ENCODE measurements at regions of chr10 and their contacts with region 1.

Region 1: GRCh38 chr10:14528450-14528849 is 197.7 kb upstream of the FRMD4A start:
- DNase-seq: no peak
- H3K4me3 Mint-ChIP-seq: peak overlapping the region; percentile 62
- H3K27ac Mint-ChIP-seq: peak overlapping the region; percentile 82
- H3K4me1 Mint-ChIP-seq: peaks cover 92% of the 10 kb centered on the region
- H3K27me3 Mint-ChIP-seq: no peaks in the 10 kb centered on the region

Region 2: DNA sequence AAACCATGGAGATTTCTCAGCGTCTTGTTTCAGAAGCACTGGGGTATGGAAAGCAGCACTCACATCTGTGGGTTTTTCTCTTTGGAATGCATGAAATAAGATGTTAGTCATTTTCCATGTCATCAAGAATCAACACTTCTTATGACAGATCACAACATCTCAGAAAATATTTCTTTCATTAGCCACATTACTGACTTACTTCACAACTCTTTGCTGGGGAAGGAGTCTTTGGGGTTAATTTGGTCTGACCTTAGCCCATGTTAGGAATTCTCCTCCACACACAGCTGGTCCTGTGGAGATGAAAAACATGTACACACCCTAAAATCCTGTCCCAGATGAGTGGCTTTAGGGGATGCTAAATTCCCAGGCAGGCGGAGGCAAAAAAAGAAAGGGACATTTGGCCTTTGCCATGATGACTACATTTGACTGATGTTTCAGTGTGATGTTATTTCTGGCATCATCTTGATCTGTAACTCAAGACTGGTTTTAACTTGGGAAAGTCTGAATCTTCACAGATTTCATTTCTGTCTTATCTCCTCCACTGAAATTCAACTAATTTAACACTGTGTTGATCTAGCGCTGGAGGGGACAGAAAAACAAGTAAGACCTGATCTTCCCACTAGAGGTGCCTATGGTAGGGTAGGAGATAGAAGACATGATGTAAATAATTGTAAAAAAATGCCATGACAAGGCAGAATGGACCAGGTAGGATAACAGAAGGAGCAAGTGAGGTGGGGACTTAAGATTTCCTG is 578.4 kb before region 1 on chr10:
- intact Hi-C with region 1: no loop called
- DNase-seq: no peak
- H3K4me3 Mint-ChIP-seq: no peak overlapping the region
- H3K27ac Mint-ChIP-seq: no peak overlapping the region
- H3K4me1 Mint-ChIP-seq: no peaks in the 10 kb centered on the region
- H3K27me3 Mint-ChIP-seq: peaks cover 2% of the 10 kb centered on the region

Region 3: GRCh38 chr10:14507176-14507575 is 21.3 kb before region 1 on chr10:
- intact Hi-C with region 1: loop called (anchors 2 kb)
- DNase-seq: peak; percentile 37
- H3K4me3 Mint-ChIP-seq: no peak overlapping the region
- H3K27ac Mint-ChIP-seq: peak overlapping the region; percentile 70
- H3K4me1 Mint-ChIP-seq: peaks cover 35% of the 10 kb centered on the region
- H3K27me3 Mint-ChIP-seq: no peaks in the 10 kb centered on the region

Region 4: GRCh38 chr10:14553448-14553847 is 25.0 kb after region 1 on chr10:
- intact Hi-C with region 1: loop called (anchors 2 kb)
- DNase-seq: no peak
- H3K4me3 Mint-ChIP-seq: peak overlapping the region; percentile 11
- H3K27ac Mint-ChIP-seq: peak overlapping the region; percentile 78
- H3K4me1 Mint-ChIP-seq: peaks cover 84% of the 10 kb centered on the region
- H3K27me3 Mint-ChIP-seq: peaks cover 1% of the 10 kb centered on the region

Region 5: DNA sequence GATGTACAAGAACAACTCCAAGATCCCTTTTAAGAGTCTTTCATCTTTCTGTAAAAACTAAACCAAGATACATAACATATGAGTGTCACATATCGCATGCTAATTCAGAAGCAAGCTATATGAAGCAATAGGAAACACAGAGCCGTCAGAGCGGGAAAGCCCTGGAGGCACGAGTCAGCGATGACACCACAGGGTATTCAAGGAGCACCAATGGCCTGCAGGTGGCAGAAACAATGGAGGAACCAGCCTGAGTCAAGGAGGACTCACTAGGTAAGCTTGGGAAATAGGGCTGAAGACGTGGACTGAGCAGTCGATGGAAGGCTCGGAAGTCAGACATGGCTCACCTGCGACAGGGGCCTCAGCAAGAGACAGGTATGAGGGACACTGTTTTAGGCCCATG is 31.8 kb after region 1 on chr10:
- intact Hi-C with region 1: loop called (anchors 5 kb)
- DNase-seq: peak; percentile 59
- H3K4me3 Mint-ChIP-seq: peak overlapping the region; percentile 41
- H3K27ac Mint-ChIP-seq: peak overlapping the region; percentile 95
- H3K4me1 Mint-ChIP-seq: peaks cover 97% of the 10 kb centered on the region
- H3K27me3 Mint-ChIP-seq: no peaks in the 10 kb centered on the region

Region 6: GRCh38 chr10:14635043-14635710 is 106.7 kb after region 1 on chr10:
- intact Hi-C with region 1: no loop called
- DNase-seq: no peak
- H3K4me3 Mint-ChIP-seq: no peak overlapping the region
- H3K27ac Mint-ChIP-seq: no peak overlapping the region
- H3K4me1 Mint-ChIP-seq: peaks cover under 1% of the 10 kb centered on the region
- H3K27me3 Mint-ChIP-seq: peaks cover 3% of the 10 kb centered on the region